IMR-90 (cell line): ENCODE measurements at regions of chr2 and their contacts with region 1.

Region 1: DNA sequence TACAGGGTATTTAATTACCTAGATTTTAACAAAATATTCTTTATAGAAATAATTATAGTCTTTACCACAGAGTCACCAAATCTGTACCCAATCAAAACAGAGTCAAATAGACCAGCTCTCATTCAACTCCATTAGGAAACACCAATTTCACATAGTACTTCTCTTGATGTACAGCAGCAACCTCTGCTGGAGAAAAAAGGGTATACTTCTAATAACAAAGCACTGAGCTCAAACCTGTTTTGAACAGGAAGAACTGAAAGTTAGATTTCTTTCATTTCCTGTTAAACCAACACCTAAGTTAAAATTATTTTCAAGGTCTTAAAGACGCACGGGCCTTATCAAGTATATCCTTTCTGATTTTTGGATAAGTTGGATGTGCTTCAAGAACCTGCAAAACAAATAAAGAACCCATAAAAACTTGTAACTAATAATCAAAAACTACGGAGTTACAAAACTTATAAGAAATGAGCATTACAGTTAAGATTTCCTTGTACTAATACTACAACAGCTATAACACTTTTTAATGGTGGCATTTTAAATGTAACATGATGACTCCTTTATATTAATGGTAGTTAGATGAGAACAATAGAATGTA is 79.0 kb downstream of the TTC21B start:
- DNase-seq: peak; percentile 75
- ATAC-seq: peak; percentile 90
- H3K4me3 ChIP-seq: no peak overlapping the region
- H3K27ac ChIP-seq: no peak overlapping the region
- H3K4me1 ChIP-seq: no peaks in the 10 kb centered on the region; the same call in 1 of the 2 replicates
- H3K27me3 ChIP-seq: no peaks in the 10 kb centered on the region
- CTCF ChIP-seq: peak; percentile 88
- POLR2A ChIP-seq: no peak
- RAD21 ChIP-seq: peak; percentile 87

Region 2: GRCh38 chr2:165239230-165239629 is 635.3 kb before region 1 on chr2 and contains the start of gene SCN2A:
- CTCF ChIA-PET with region 1: interaction called, 3 read pairs
- POLR2A ChIA-PET with region 1: no interaction called
- dilution Hi-C with region 1: no loop called
- in situ Hi-C with region 1: no loop called
- intact Hi-C with region 1: loop called (anchors 10 kb)
- DNase-seq: peak; percentile 49
- ATAC-seq: 0 out of 2 replicates have a peak, but pooled peaks have one; percentile 29
- H3K4me3 ChIP-seq: no peak within 1 kb of the TSS
- H3K27ac ChIP-seq: no peak within 1 kb of the TSS
- H3K4me1 ChIP-seq: no peaks in the 10 kb centered on the region
- H3K27me3 ChIP-seq: no peaks in the 10 kb centered on the region
- CTCF ChIP-seq: peak; percentile 46
- POLR2A ChIP-seq: no peak
- RAD21 ChIP-seq: peak; percentile 41
- total RNA-seq, gene SCN2A: 0.54 and 0.56 TPM in 2 replicates

Region 3: DNA sequence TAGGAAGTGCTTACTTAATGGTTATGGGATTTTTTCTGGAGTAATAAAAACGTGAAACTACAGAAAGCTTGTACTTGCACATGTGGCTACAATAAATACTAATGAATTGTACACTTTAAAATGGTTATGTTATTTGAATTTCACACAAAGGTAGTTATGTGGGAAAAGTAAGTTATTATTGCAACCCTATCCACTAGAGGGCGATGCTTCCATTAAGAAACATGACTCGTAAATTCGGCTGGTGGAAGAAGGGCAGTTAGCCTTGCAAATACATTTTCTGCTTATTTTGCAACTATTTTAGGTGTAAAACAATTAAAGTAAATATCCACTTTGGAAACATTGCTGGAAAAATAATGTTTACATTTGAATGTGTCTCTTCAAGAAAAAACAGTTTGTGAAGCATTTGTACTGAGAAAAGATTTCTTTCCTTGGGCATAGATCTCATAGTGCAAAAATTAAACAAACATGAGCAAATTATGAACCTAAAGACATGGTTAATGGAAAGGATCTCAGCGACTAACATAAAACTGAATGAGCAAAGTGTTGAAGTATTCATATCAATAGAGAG is 473.2 kb before region 1 on chr2:
- CTCF ChIA-PET with region 1: interaction called, 20 read pairs
- POLR2A ChIA-PET with region 1: no interaction called
- dilution Hi-C with region 1: no loop called
- in situ Hi-C with region 1: loop called (anchors 5 kb)
- intact Hi-C with region 1: loop called (anchors 1 kb)
- DNase-seq: peak; percentile 79
- ATAC-seq: peak; percentile 59
- H3K4me3 ChIP-seq: no peak overlapping the region
- H3K27ac ChIP-seq: no peak overlapping the region
- H3K4me1 ChIP-seq: no peaks in the 10 kb centered on the region
- H3K27me3 ChIP-seq: no peaks in the 10 kb centered on the region
- CTCF ChIP-seq: peak; percentile 75
- POLR2A ChIP-seq: no peak
- RAD21 ChIP-seq: peak; percentile 70

Region 4: DNA sequence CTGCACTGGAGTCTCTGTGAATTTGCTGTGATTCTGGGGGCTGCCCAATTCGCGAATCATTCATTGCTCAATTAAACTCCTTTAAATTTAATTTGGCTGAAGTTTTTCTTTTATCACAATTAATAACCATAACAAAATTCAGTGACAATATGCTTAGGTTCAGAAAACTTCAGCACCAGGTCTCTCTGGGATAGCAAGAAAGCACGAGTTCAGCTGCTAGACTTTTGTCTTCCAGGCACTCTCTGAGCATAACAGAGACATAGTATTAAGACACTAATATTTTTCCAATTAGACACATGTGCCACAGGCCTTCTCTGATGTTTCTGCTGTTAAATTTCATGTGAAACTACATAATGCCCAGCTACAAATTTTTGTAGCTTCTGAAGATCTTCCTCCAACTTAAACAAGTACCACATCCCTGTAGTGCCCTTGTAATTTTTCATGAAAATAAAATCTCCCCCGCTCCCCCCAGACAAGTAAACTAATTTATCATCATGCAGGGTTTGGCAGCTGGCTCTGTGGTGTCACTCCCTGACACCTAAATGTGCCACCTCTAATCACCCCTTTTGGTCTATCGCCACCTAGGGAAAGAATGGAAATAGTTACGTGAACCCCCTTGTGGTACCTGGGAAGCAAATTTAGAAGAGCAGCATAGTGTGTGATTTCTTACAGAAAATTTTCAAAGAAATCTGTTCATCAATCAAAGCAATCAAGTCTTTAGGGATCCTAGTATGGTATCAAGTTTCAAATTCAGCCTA is 310.9 kb before region 1 on chr2:
- CTCF ChIA-PET with region 1: no interaction called
- POLR2A ChIA-PET with region 1: no interaction called
- dilution Hi-C with region 1: no loop called
- in situ Hi-C with region 1: no loop called
- intact Hi-C with region 1: loop called (anchors 10 kb)
- DNase-seq: no peak
- ATAC-seq: no peak
- H3K4me3 ChIP-seq: no peak overlapping the region
- H3K27ac ChIP-seq: no peak overlapping the region
- H3K4me1 ChIP-seq: no peaks in the 10 kb centered on the region
- H3K27me3 ChIP-seq: no peaks in the 10 kb centered on the region
- CTCF ChIP-seq: no peak
- POLR2A ChIP-seq: no peak
- RAD21 ChIP-seq: no peak

Region 5: DNA sequence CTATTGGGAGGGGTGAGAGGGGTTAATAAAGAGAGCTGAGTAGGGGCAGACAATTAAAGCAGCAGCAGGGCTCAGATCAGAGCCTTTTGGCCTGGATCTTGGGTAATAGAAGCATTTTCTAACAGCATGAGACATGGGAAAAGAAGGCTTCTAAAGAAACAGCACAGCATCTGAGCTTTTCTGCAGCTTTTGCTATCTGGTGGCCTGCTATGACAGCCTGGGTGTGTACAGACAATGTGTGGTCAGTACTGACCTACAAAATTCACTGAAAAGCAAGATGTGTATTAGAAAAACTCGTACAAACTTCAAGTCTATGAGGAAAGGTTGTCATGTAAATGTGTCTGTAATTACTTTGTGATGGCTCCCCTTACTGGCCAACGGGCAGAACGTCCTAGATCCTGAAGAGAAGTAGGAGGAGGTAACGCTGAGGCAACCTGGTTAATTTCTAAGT is 176.1 kb before region 1 on chr2:
- CTCF ChIA-PET with region 1: interaction called, 7 read pairs
- POLR2A ChIA-PET with region 1: no interaction called
- dilution Hi-C with region 1: no loop called
- in situ Hi-C with region 1: no loop called
- intact Hi-C with region 1: loop called (anchors 5 kb)
- DNase-seq: peak; percentile 43
- ATAC-seq: peak; percentile 87
- H3K4me3 ChIP-seq: no peak overlapping the region
- H3K27ac ChIP-seq: no peak overlapping the region
- H3K4me1 ChIP-seq: no peaks in the 10 kb centered on the region
- H3K27me3 ChIP-seq: no peaks in the 10 kb centered on the region; the same call in 1 of the 2 replicates
- CTCF ChIP-seq: peak; percentile 43
- POLR2A ChIP-seq: no peak
- RAD21 ChIP-seq: peak; percentile 37

Region 6: GRCh38 chr2:166042356-166042755 is 167.8 kb after region 1 on chr2:
- CTCF ChIA-PET with region 1: no interaction called
- POLR2A ChIA-PET with region 1: no interaction called
- dilution Hi-C with region 1: no loop called
- in situ Hi-C with region 1: no loop called
- intact Hi-C with region 1: no loop called
- DNase-seq: no peak
- ATAC-seq: no peak
- H3K4me3 ChIP-seq: no peak overlapping the region
- H3K27ac ChIP-seq: no peak overlapping the region
- H3K4me1 ChIP-seq: no peaks in the 10 kb centered on the region
- H3K27me3 ChIP-seq: no peaks in the 10 kb centered on the region
- CTCF ChIP-seq: no peak
- POLR2A ChIP-seq: no peak
- RAD21 ChIP-seq: no peak